ENCODE measurements at regions of chr3 and their contacts with region 1.

Region 1: GRCh38 chr3:71360764-71361163 is 222.8 kb downstream of the FOXP1 start:
- DNase-seq: no peak
- ATAC-seq: peak; percentile 62
- H3K4me3 Mint-ChIP-seq: peak overlapping the region; percentile 81
- H3K27ac Mint-ChIP-seq: peak overlapping the region; percentile 93
- H3K4me1 Mint-ChIP-seq: peaks cover 88% of the 10 kb centered on the region
- H3K27me3 Mint-ChIP-seq: no peaks in the 10 kb centered on the region
- CTCF ChIP-seq: no peak

Region 2: DNA sequence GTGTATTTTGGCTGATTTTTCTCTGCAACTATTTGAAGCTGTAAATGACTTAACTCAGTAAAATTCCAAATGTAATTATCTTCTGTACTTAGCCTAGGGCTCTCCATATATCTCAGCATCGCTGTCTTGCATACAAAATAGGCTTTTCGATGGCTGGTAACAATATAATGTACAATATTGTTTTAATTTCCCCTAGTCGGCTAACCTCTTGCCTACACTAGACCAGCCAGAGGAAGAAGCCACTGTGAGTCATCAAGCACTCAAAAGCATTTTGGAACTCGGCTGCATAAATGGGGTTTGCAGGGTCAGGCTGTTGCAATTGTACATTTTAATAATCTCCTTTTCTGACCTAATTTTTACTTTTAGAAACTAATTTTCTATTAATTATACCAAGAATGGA is 361.0 kb before region 1 on chr3:
- CTCF ChIA-PET with region 1: no interaction called
- POLR2A ChIA-PET with region 1: no interaction called
- intact Hi-C with region 1: no loop called
- DNase-seq: no peak
- ATAC-seq: no peak
- H3K4me3 Mint-ChIP-seq: no peak overlapping the region
- H3K27ac Mint-ChIP-seq: peak overlapping the region; percentile 50
- H3K4me1 Mint-ChIP-seq: peaks cover 33% of the 10 kb centered on the region
- H3K27me3 Mint-ChIP-seq: no peaks in the 10 kb centered on the region
- CTCF ChIP-seq: no peak

Region 3: DNA sequence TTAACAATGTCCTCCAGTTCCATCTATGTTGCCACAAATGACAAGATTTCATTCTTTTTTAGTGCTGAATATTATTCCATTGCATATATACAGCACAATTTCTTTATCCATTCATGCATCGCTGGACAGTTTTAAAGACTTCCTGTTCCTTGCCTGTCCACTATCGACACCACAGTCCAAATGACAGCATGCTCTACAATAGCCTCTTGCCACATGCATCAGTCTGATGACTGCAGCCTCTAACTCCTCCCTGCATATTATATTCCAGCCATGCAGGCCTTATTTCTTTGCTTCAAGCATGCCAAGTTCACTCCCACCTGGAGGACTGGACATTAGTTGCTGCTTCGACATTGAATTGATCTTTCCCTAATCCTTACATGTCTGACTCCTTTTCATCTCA is 83.4 kb before region 1 on chr3:
- CTCF ChIA-PET with region 1: no interaction called
- POLR2A ChIA-PET with region 1: no interaction called
- intact Hi-C with region 1: no loop called
- DNase-seq: no peak
- ATAC-seq: no peak
- H3K4me3 Mint-ChIP-seq: no peak overlapping the region
- H3K27ac Mint-ChIP-seq: no peak overlapping the region
- H3K4me1 Mint-ChIP-seq: peaks cover 36% of the 10 kb centered on the region
- H3K27me3 Mint-ChIP-seq: no peaks in the 10 kb centered on the region
- CTCF ChIP-seq: no peak

Region 4: GRCh38 chr3:71345429-71346040 is 15.2 kb before region 1 on chr3:
- CTCF ChIA-PET with region 1: interaction called, 3 read pairs
- POLR2A ChIA-PET with region 1: interaction called, 4 read pairs
- intact Hi-C with region 1: loop called (anchors 2 kb)
- DNase-seq: no peak
- ATAC-seq: no peak
- H3K4me3 Mint-ChIP-seq: no peak overlapping the region
- H3K27ac Mint-ChIP-seq: peak overlapping the region; percentile 57
- H3K4me1 Mint-ChIP-seq: peaks cover 32% of the 10 kb centered on the region
- H3K27me3 Mint-ChIP-seq: no peaks in the 10 kb centered on the region
- CTCF ChIP-seq: no peak

Region 5: GRCh38 chr3:71380096-71380495 is 19.3 kb after region 1 on chr3:
- CTCF ChIA-PET with region 1: interaction called, 5 read pairs
- POLR2A ChIA-PET with region 1: interaction called, 8 read pairs
- intact Hi-C with region 1: loop called (anchors 1 kb)
- DNase-seq: no peak
- ATAC-seq: no peak
- H3K4me3 Mint-ChIP-seq: no peak overlapping the region
- H3K27ac Mint-ChIP-seq: peak overlapping the region; percentile 24
- H3K4me1 Mint-ChIP-seq: peaks cover 80% of the 10 kb centered on the region
- H3K27me3 Mint-ChIP-seq: no peaks in the 10 kb centered on the region
- CTCF ChIP-seq: no peak

Region 6: GRCh38 chr3:71389911-71390573 is 29.3 kb after region 1 on chr3:
- CTCF ChIA-PET with region 1: interaction called, 5 read pairs
- POLR2A ChIA-PET with region 1: interaction called, 53 read pairs
- intact Hi-C with region 1: loop called (anchors 1 kb)
- DNase-seq: no peak
- ATAC-seq: peak; percentile 6
- H3K4me3 Mint-ChIP-seq: peak overlapping the region; percentile 73
- H3K27ac Mint-ChIP-seq: peak overlapping the region; percentile 99
- H3K4me1 Mint-ChIP-seq: peaks cover 86% of the 10 kb centered on the region
- H3K27me3 Mint-ChIP-seq: no peaks in the 10 kb centered on the region
- CTCF ChIP-seq: no peak

Region 7: DNA sequence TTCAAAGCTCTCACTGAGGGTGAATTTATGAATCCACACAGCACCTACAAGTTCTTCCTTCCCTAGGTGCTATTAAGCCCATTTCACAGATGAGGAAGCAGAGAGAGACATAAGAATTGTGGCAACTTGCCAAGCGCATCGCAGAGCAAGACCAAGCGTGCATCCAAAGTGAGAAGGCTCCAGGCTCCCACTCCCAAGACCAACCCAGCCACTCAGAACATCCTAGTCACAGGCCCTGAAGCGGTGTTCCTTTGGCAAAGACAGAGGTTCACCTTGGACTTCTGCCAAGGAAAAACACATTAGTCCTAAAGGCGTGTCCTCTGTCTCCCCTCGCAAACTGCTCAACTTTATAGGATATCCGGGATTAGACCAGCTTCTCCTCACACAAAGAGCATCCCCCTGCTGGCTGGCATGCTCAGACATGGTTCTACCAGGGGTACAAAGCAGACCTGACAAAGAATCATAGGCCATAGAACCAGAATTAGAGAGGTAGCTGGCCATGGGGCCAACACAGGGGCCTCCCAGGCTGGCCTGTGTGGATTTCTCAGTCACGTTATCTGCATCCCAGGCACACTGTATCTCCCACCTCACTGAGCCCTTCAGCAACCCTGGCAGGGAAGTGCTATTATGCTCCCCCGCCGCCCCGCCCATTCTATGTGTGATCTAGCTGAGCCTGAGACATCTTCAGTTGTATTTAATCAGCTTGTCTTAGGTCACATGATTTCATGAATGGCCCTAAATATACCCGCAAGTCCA is 62.6 kb after region 1 on chr3:
- CTCF ChIA-PET with region 1: no interaction called
- POLR2A ChIA-PET with region 1: interaction called, 9 read pairs
- intact Hi-C with region 1: loop called (anchors 1 kb)
- DNase-seq: no peak
- ATAC-seq: no peak
- H3K4me3 Mint-ChIP-seq: no peak overlapping the region
- H3K27ac Mint-ChIP-seq: peak overlapping the region; percentile 99
- H3K4me1 Mint-ChIP-seq: peaks cover 91% of the 10 kb centered on the region
- H3K27me3 Mint-ChIP-seq: no peaks in the 10 kb centered on the region
- CTCF ChIP-seq: no peak

Measured in activated B cell treated with CpG ODN at 0.5 μM for 24 hours (primary cell).